T-cell (primary cell): ENCODE measurements at regions of chr12 and their contacts with region 1.

Region 1: GRCh38 chr12:57416039-57416996 is 14.5 kb downstream of the R3HDM2 start:
- DNase-seq: no peak
- ATAC-seq: no peak
- H3K4me3 ChIP-seq: no peak overlapping the region
- H3K4me3 Mint-ChIP-seq: no peak overlapping the region
- H3K27ac ChIP-seq: no peak overlapping the region
- H3K27ac Mint-ChIP-seq: peak overlapping the region; percentile 11 to 60
- H3K4me1 ChIP-seq: peaks cover 0 to under 1% of the 10 kb centered on the region in 2 experiments
- H3K4me1 Mint-ChIP-seq: peaks cover 56 to 61% (median 57%) of the 10 kb centered on the region in 3 donors
- H3K27me3 ChIP-seq: no peaks in the 10 kb centered on the region
- H3K27me3 Mint-ChIP-seq: no peaks in the 10 kb centered on the region

Region 2: DNA sequence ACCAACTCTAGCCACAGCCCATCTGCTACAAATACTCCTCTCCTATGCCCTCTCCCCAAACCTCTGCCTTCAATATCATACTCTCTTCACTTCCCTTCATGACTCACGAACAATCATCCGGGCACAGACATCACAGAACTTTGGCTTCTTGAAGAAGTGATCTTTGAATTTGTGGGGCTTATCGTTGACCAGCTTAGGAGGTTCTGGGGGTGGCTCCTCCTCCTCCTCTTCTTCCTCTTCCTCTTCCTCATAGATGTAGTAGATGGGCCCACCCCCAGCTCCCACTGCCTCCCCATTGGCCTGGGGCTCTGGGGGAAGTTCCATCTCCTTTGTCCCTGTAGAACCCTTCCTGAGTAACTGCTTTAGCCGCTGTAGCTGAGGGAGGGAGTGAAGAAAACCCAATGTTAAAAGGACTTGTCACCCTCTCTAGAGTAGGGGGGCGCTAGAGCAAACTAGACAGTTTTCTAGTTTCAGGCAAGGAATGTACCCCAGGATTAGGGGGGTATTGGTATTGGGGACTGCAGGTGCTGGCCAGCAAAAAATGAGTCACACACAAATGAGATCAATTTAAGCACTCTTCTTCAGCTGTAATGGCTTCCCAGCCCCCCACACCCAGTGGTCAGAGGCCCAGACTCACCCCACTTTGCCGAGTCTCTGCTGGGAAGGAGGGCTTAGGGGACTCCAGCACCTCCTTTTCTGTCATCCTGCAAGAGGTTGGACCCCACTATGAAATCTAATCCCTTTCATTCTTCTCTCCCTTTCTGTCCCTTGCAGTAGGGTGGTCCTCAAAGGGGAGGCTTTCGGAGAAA is 167.2 kb before region 1 on chr12:
- CTCF ChIA-PET with region 1: interaction called in 1 of 2 experiments, 10 read pairs
- POLR2A ChIA-PET with region 1: no interaction called
- DNase-seq: no peak
- ATAC-seq: no peak
- H3K4me3 ChIP-seq: no peak overlapping the region
- H3K4me3 Mint-ChIP-seq: no peak overlapping the region
- H3K27ac ChIP-seq: no peak overlapping the region
- H3K27ac Mint-ChIP-seq: no peak overlapping the region
- H3K4me1 ChIP-seq: peaks cover 0 to 2% of the 10 kb centered on the region in 2 experiments
- H3K4me1 Mint-ChIP-seq: peaks cover under 1 to 11% (median 7%) of the 10 kb centered on the region in 3 donors
- H3K27me3 ChIP-seq: peaks cover 0 to 16% of the 10 kb centered on the region in 2 experiments
- H3K27me3 Mint-ChIP-seq: peaks cover 2 to 8% of the 10 kb centered on the region in 2 donors

Region 3: DNA sequence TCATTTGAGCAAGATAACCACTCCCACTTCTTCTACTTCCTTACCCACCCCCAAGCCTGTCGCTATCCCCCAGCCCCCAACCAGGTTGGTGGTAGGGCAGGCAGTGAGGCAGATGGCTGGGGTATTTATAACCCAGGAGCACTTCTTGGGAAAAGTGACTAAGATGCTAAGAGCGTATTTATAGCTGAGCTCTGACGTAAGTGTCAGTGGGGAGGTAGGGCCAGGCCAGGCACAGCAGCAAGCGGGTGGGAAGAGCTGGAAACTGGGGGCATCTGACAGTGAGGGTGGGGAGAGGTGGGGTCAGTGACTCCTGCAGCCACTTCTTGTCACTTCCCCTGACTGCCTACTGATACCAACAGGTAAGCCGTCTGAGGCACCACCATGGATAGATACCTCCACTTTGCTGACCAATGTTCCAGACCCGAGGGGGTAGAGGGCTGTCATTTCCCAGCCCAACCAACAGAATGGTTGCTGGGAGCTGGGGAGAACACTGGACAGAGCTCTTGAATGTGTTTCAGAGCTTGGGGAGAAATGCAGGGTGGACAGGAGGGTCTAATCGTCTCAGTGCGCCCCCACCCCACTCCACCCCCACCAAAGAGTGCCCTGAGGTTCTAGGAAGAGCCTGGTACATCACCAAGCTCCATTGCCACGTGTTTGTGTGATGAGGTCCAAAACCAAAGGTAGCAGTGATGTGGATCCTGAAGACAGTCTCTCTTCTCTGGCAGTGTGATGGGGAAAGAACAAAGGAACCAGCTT is 36.0 kb after region 1 on chr12:
- CTCF ChIA-PET with region 1: interaction called in 1 of 2 experiments, 10 read pairs
- POLR2A ChIA-PET with region 1: no interaction called
- DNase-seq: no peak
- ATAC-seq: no peak
- H3K4me3 ChIP-seq: no peak overlapping the region
- H3K4me3 Mint-ChIP-seq: no peak overlapping the region
- H3K27ac ChIP-seq: no peak overlapping the region
- H3K27ac Mint-ChIP-seq: no peak overlapping the region
- H3K4me1 ChIP-seq: peaks cover 0 to 10% of the 10 kb centered on the region in 2 experiments
- H3K4me1 Mint-ChIP-seq: peaks cover 7 to 15% (median 8%) of the 10 kb centered on the region in 3 donors
- H3K27me3 ChIP-seq: peaks cover 0 to 33% of the 10 kb centered on the region in 2 experiments
- H3K27me3 Mint-ChIP-seq: peaks cover 0 to 1% of the 10 kb centered on the region in 2 donors

Region 4: DNA sequence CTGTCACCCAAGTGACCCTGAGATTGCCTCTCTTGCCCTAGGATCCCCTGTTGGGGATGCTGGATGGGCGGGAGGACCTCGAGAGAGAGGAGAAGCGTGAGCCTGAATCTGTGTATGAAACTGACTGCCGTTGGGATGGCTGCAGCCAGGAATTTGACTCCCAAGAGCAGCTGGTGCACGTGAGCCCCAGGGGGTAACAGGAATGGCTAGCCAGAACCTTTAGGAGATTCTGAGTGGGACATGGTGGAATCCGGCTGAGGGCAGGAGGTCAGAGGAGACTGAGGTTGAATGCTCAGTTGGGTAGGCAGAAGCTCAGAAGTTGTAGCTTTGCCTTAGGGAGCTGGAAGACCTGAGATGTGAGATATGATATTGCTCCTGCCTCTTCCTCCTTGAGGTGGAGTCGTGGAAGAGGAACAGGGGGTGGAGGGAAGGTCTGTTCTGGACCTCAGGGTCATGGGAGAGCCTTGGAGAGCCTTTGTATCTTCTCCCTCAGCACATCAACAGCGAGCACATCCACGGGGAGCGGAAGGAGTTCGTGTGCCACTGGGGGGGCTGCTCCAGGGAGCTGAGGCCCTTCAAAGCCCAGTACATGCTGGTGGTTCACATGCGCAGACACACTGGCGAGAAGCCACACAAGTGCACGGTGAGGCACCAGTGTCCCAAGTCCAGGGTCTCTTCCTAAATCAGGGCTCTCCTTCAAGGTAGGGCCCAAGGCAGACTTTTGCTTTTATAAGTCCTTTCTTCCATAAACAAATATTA is 49.6 kb after region 1 on chr12:
- CTCF ChIA-PET with region 1: no interaction called
- POLR2A ChIA-PET with region 1: no interaction called
- DNase-seq: no peak
- ATAC-seq: no peak
- H3K4me3 ChIP-seq: no peak overlapping the region
- H3K4me3 Mint-ChIP-seq: no peak overlapping the region
- H3K27ac ChIP-seq: no peak overlapping the region
- H3K27ac Mint-ChIP-seq: peak overlapping the region; percentile 17 to 37
- H3K4me1 ChIP-seq: peaks cover 9 to 31% of the 10 kb centered on the region in 2 experiments
- H3K4me1 Mint-ChIP-seq: peaks cover 27 to 36% (median 35%) of the 10 kb centered on the region in 3 donors
- H3K27me3 ChIP-seq: peaks cover 0 to 20% of the 10 kb centered on the region in 2 experiments
- H3K27me3 Mint-ChIP-seq: peaks cover 0 to 11% of the 10 kb centered on the region in 2 donors